SK-N-SH (cell line): ENCODE measurements at regions of chr5 and their contacts with region 1.

Region 1: GRCh38 chr5:107501965-107502675 is 168.6 kb downstream of the EFNA5 start:
- DNase-seq: peak; percentile 39
- H3K4me3 ChIP-seq: peak overlapping the region; percentile 45 to 63
- H3K27ac ChIP-seq: peak overlapping the region; percentile 61 to 97
- H3K4me1 ChIP-seq: peaks cover 11 to 33% of the 10 kb centered on the region in 2 experiments; a peak in 3 of 4 replicates
- H3K27me3 ChIP-seq: no peaks in the 10 kb centered on the region
- CTCF ChIP-seq: no peak
- EP300 ChIP-seq: 0 out of 4 replicates have a peak, but pooled peaks of 1 of the 2 experiments have one; percentile 20
- RAD21 ChIP-seq: no peak

Region 2: DNA sequence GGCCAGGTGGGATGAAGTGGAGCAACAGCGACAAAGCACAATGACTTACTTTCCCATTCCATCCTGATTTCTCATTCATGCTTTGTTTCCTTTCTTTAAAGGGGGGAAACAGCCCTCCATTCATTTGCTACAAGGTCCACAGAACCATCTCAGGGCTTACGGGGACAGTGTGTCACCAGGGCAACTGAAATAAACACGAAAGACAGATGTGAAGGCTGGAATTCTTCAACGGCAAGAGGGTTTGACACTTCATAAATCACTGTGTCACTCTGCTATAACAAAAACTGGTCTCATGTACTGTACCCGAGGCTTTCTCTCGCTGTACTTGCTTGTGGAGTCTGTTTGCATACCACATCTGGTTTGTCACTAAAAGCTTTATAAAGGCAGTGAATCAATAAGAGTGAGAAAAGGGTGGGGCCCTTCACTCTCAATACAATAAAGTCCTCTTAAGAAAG is 17.8 kb after region 1 on chr5:
- CTCF ChIA-PET with region 1: interaction called, 20 read pairs
- POLR2A ChIA-PET with region 1: interaction called, 7 read pairs
- DNase-seq: peak; percentile 28
- H3K4me3 ChIP-seq: no peak overlapping the region
- H3K27ac ChIP-seq: peak overlapping the region in 1 of 2 experiments; percentile 74; a peak in 2 of 4 replicates
- H3K4me1 ChIP-seq: peaks cover 0 to 35% of the 10 kb centered on the region in 2 experiments; a peak in 2 of 4 replicates
- H3K27me3 ChIP-seq: no peaks in the 10 kb centered on the region
- CTCF ChIP-seq: no peak
- EP300 ChIP-seq: peak in 1 of 2 experiments; percentile 96; a peak in 2 of 4 replicates
- RAD21 ChIP-seq: peak; percentile 19; the same call in 1 of the 2 replicates

Region 3: GRCh38 chr5:107555450-107556090 is 53.5 kb after region 1 on chr5:
- CTCF ChIA-PET with region 1: no interaction called
- POLR2A ChIA-PET with region 1: interaction called, 10 read pairs
- DNase-seq: no peak
- H3K4me3 ChIP-seq: no peak overlapping the region; a peak in 1 of 4 replicates
- H3K27ac ChIP-seq: peak overlapping the region; percentile 6 to 65; a peak in 2 of 4 replicates
- H3K4me1 ChIP-seq: peaks cover 12 to 32% of the 10 kb centered on the region in 2 experiments; a peak in 3 of 4 replicates
- H3K27me3 ChIP-seq: no peaks in the 10 kb centered on the region
- CTCF ChIP-seq: no peak
- EP300 ChIP-seq: peak in 1 of 2 experiments; percentile 76; a peak in 1 of 4 replicates
- RAD21 ChIP-seq: no peak